ENCODE measurements at regions of chr2 and their contacts with region 1.

Region 1: GRCh38 chr2:96174251-96175144 is 29.3 kb upstream of the DUSP2 start:
- DNase-seq: peak; percentile 30 to 84
- H3K4me3 ChIP-seq: no peak overlapping the region
- H3K27ac ChIP-seq: no peak overlapping the region
- H3K4me1 ChIP-seq: no peaks in the 10 kb centered on the region
- H3K27me3 ChIP-seq: no peaks in the 10 kb centered on the region
- CTCF ChIP-seq: peak; percentile 79 to 88 (median 86)

Region 2: DNA sequence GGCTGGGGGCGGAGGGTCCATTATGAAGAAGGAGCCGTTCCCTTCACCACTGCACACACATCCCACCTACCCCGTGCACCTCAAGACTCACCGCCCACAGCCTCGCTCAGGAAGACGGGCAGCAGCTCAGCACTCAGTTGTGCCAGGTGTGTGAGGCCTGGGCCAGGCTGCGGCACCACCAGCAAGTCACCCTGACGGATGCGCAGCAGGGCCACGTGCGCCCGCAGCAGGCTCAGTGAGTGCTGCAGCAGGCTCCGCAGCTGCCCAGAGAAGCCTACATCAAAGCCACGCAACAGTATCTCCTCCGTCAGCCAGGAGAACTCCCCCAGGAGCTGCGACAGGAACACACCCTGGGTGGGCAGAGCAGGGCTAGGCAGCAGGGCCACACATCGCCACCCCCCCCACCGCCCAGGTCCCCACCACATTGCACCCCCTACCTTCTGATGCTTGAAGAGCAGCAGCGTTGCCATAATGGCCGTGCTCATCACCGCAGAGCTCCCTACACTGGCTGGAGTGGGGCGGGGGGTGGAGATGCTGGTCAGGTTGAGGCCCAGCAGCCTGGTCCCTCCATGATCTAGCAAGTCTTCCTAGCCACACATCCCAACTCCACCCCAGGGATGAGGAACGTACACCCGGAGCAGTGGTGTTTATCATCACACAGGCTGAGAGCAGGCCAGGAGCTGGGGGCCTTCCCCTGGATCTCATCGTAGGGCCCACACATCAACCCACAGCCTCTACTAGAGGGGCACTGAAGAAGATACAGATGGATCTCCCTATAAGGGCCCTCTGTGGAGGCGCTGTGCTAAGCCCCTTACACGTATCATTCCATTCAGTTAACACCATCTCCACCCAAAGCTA is 149.9 kb before region 1 on chr2:
- intact Hi-C with region 1: loop called (anchors 10 kb)
- DNase-seq: peak in 1 of 2 donors; percentile 58
- H3K4me3 ChIP-seq: no peak overlapping the region
- H3K27ac ChIP-seq: no peak overlapping the region
- H3K4me1 ChIP-seq: no peaks in the 10 kb centered on the region
- H3K27me3 ChIP-seq: no peaks in the 10 kb centered on the region
- CTCF ChIP-seq: no peak

Region 3: DNA sequence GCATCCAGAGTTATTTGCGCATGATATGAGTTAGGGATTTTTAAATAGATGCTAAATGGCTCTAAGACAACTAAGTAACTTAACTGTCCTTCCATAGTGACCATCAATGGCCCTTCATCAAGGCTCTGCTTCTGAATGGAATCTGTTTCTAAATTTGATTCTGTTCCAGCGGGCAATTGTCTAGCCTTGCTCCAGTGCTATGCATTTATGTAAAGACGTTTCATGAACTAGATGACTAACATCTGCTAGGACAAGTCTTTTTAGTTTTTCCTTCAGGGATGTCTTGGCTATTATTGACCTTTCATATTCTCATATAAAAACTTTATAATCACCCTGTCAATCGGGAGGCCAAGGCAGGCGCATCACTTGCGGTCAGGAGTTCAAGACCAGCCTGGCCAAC is 46.0 kb before region 1 on chr2:
- intact Hi-C with region 1: no loop called
- DNase-seq: no peak
- H3K4me3 ChIP-seq: no peak overlapping the region
- H3K27ac ChIP-seq: no peak overlapping the region
- H3K4me1 ChIP-seq: no peaks in the 10 kb centered on the region
- H3K27me3 ChIP-seq: no peaks in the 10 kb centered on the region
- CTCF ChIP-seq: no peak

Region 4: GRCh38 chr2:96138179-96139145 is 36.0 kb before region 1 on chr2 and contains the start of gene ASTL:
- intact Hi-C with region 1: loop called (anchors 1 kb)
- DNase-seq: no peak
- H3K4me3 ChIP-seq: no peak within 1 kb of the TSS
- H3K27ac ChIP-seq: no peak within 1 kb of the TSS
- H3K4me1 ChIP-seq: no peaks in the 10 kb centered on the region
- H3K27me3 ChIP-seq: no peaks in the 10 kb centered on the region
- CTCF ChIP-seq: peak; percentile 37 to 64 (median 50)
- total RNA-seq, gene ASTL: not detected